PC-9 (cell line): ENCODE measurements at regions of chr5 and their contacts with region 1.

Region 1: GRCh38 chr5:53481887-53482716 is 1.7 kb downstream of the FST start:
- DNase-seq: peak; percentile 66 to 69
- H3K4me3 ChIP-seq: peak overlapping the region; percentile 87
- H3K27ac ChIP-seq: no peak overlapping the region
- H3K4me1 ChIP-seq: peaks cover 3% of the 10 kb centered on the region
- H3K27me3 ChIP-seq: peaks cover 11% of the 10 kb centered on the region; the same call in 1 of the 2 replicates
- CTCF ChIP-seq: no peak

Region 2: DNA sequence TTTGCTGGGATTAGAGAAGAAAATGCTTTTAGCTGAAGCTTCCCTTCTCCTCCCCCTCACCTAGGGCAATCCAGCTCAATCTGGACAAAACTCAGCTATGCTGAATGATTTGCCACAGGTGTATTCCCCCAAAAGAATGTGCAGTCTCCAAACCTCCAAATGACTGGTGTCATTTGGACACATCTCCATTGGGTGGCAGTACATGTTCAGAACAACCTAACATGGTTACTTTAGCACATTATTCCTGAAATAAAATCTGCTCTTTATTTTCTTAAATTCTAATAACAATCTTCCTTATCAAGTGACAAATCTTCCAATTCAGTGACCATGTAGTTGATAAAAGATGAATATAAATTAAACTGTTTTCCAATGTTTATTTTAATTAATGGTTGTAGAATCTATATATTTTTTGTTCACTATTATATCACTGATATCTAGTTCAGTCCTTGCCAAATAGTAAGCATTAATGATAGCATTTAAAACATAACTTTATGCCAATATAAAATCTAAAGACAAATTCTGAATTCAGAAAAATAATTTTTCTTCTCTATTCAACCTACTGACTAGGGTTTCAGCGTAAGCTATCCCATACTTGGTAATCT is 311.3 kb before region 1 on chr5:
- CTCF ChIA-PET with region 1: no interaction called
- POLR2A ChIA-PET with region 1: no interaction called
- intact Hi-C with region 1: loop called (anchors 5 kb)
- DNase-seq: peak in 1 of 2 experiments; percentile 11
- H3K4me3 ChIP-seq: no peak overlapping the region
- H3K27ac ChIP-seq: no peak overlapping the region
- H3K4me1 ChIP-seq: no peaks in the 10 kb centered on the region
- H3K27me3 ChIP-seq: no peaks in the 10 kb centered on the region
- CTCF ChIP-seq: peak; percentile 81

Region 3: GRCh38 chr5:53362521-53362941 is 119.6 kb before region 1 on chr5:
- CTCF ChIA-PET with region 1: interaction called, 3 read pairs
- POLR2A ChIA-PET with region 1: no interaction called
- intact Hi-C with region 1: loop called (anchors 5 kb)
- DNase-seq: peak; percentile 45 to 95
- H3K4me3 ChIP-seq: no peak overlapping the region
- H3K27ac ChIP-seq: peak overlapping the region; percentile 97
- H3K4me1 ChIP-seq: peaks cover 38% of the 10 kb centered on the region
- H3K27me3 ChIP-seq: no peaks in the 10 kb centered on the region
- CTCF ChIP-seq: no peak

Region 4: DNA sequence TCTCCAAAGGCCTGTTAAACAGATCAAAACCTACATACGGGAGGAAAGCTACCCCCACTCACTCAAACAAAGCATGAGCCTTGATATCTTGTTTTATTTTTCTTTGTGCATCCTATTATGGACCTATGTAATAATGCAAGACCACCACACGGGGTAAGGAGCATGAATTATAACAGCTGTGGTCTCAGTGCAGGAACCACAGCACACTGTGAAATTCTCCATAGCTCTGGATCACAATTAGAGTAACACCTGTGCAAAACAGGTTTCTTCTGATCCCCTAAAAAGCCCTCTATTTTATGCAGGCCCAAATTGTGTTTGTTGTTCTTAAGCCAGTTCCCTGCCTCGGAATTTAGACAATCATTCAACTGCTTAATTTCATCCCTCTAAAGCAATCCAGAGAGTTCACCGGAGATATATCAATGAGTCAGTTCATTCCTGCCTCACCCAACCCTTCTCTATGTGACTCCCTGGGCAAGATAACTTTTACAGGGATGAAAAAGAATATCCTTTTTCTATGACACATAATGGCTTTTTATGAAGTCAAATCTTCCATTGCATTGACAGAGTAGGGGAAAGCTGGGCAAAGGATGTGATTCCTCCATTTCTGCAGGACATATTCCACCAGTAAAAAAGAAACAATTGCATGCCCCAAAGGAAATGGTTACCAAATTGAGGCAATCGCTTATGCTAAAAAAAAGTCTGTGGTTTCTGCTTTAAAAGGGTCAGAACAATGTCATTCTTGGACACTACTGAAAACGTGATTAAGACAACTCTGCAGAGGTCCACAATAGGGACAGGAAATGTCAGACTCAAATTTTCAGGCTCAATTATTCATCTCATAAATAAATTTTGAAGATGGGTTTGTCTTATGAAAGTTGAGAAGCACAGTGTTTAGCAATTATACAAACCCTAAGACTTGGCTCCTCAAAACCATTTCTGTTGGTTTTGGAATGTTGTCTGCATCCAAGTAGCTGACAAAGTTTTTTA is 43.3 kb before region 1 on chr5:
- CTCF ChIA-PET with region 1: no interaction called
- POLR2A ChIA-PET with region 1: no interaction called
- intact Hi-C with region 1: loop called (anchors 5 kb)
- DNase-seq: no peak
- H3K4me3 ChIP-seq: no peak overlapping the region
- H3K27ac ChIP-seq: no peak overlapping the region
- H3K4me1 ChIP-seq: no peaks in the 10 kb centered on the region
- H3K27me3 ChIP-seq: no peaks in the 10 kb centered on the region
- CTCF ChIP-seq: no peak

Region 5: GRCh38 chr5:53446908-53447307 is 35.2 kb before region 1 on chr5:
- CTCF ChIA-PET with region 1: no interaction called
- POLR2A ChIA-PET with region 1: interaction called, 12 read pairs
- intact Hi-C with region 1: no loop called
- DNase-seq: no peak
- H3K4me3 ChIP-seq: no peak overlapping the region
- H3K27ac ChIP-seq: no peak overlapping the region
- H3K4me1 ChIP-seq: no peaks in the 10 kb centered on the region
- H3K27me3 ChIP-seq: no peaks in the 10 kb centered on the region
- CTCF ChIP-seq: no peak

Region 6: DNA sequence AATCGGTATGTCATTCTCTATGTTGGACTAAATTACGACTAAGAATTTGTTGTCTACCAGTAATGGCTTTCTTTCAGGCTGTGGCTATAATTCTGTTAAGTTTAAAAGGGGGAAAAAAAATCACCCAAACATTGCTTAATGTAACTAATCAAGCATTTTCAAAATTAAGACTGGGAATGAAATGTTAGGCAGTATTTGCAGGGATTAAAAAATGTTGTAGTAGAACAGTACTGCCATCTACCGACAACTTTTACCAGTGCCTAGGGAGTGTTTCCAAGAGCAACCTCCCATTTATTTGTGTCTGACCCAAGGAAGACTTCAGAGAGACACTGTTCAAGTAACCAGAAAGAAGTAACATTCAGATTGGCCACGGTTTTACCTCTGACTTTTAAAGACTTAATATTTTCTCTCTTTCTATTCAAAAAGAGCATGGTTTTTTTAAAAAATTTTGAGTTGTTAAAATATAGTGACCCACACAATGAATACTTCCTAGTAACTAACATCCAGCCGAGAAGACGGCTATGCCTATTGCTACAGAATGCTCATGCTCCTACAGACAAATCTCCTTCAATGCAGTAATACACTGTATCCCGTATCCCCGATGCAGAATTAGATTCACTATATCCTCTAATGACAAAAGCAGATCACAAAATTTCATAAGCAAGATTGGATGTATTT is 735.9 kb after region 1 on chr5:
- CTCF ChIA-PET with region 1: no interaction called
- POLR2A ChIA-PET with region 1: no interaction called
- intact Hi-C with region 1: loop called (anchors 2 kb)
- DNase-seq: peak; percentile 2 to 44
- H3K4me3 ChIP-seq: no peak overlapping the region
- H3K27ac ChIP-seq: no peak overlapping the region
- H3K4me1 ChIP-seq: no peaks in the 10 kb centered on the region
- H3K27me3 ChIP-seq: no peaks in the 10 kb centered on the region
- CTCF ChIP-seq: peak; percentile 76